ENCODE measurements at regions of chr2 and their contacts with region 1.

Region 1: DNA sequence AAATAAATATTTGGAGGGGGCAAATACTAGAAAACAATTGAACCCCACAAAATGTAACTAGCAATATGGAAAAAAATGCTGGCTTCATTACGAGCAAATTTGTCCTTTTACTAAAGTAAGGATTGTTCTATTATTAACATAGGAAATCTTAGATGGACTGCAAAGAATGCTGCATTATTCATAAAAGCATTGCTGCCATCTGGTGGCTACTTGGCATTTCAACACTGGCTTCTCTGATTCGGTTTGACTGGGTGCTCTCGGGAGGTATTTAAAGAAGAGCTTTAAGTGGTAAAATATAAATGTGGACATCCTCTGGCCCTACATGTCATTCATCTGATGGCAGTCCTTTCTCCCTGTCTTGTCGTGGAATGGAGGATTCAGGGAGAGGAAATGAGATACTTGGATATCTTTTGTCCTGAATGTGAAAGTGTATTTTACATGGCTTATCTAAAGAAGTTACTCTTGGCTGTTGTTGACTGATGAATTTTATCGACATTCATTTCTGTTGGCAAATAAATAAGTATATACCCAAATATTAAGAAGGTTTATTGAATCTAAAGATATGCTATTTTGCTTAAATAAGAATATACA is 130.2 kb downstream of the ARHGAP15 start:
- DNase-seq: peak; percentile 88
- ATAC-seq: peak; percentile 38
- H3K4me3 Mint-ChIP-seq: peak overlapping the region; percentile 72
- H3K27ac Mint-ChIP-seq: peak overlapping the region; percentile 98
- H3K4me1 Mint-ChIP-seq: peaks cover 71% of the 10 kb centered on the region
- H3K27me3 Mint-ChIP-seq: no peaks in the 10 kb centered on the region

Region 2: DNA sequence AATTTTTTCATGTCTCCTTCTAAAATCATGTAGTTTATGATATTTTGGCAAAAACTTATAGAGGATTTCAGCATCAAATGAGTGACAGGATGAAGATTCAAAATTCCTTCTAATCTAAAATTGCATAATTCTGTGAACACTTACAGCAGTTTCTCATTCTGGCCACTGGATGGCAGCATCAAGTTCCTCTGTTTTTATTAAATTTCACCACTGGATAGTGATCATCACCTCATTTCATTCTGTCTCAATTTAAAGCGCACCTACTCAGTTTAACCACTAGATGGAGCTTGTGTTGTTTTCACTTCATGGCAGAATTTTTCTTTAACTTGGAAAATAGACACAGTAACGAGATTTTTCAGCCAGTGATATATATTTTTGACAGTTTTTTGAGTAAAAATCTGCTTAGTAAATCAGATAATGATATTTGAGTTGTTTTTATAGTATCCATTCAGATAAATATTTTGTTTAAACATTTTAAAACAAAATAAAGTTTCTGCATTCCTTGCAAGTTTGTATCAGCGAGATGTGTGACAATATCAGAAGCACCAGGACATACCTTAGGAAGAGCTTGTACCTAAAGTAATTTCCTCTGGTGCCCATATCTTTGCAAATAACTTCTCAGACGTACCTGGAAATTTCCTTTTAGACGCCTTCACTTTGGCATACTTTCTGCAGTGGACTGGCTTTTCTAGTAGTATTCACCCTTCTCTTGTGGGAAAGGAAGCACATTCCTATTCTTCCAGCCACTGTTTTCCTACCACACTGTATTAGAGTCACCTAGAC is 225.0 kb before region 1 on chr2:
- CTCF ChIA-PET with region 1: interaction called, 20 read pairs
- DNase-seq: peak; percentile 70
- ATAC-seq: peak; percentile 89
- H3K4me3 Mint-ChIP-seq: no peak overlapping the region
- H3K27ac Mint-ChIP-seq: no peak overlapping the region
- H3K4me1 Mint-ChIP-seq: peaks cover 10% of the 10 kb centered on the region
- H3K27me3 Mint-ChIP-seq: peaks cover 2% of the 10 kb centered on the region

Region 3: GRCh38 chr2:143110758-143111428 is 148.6 kb before region 1 on chr2:
- CTCF ChIA-PET with region 1: interaction called, 64 read pairs
- DNase-seq: peak; percentile 78
- ATAC-seq: peak; percentile 90
- H3K4me3 Mint-ChIP-seq: peak overlapping the region; percentile 28
- H3K27ac Mint-ChIP-seq: peak overlapping the region; percentile 86
- H3K4me1 Mint-ChIP-seq: peaks cover 26% of the 10 kb centered on the region
- H3K27me3 Mint-ChIP-seq: no peaks in the 10 kb centered on the region

Region 4: DNA sequence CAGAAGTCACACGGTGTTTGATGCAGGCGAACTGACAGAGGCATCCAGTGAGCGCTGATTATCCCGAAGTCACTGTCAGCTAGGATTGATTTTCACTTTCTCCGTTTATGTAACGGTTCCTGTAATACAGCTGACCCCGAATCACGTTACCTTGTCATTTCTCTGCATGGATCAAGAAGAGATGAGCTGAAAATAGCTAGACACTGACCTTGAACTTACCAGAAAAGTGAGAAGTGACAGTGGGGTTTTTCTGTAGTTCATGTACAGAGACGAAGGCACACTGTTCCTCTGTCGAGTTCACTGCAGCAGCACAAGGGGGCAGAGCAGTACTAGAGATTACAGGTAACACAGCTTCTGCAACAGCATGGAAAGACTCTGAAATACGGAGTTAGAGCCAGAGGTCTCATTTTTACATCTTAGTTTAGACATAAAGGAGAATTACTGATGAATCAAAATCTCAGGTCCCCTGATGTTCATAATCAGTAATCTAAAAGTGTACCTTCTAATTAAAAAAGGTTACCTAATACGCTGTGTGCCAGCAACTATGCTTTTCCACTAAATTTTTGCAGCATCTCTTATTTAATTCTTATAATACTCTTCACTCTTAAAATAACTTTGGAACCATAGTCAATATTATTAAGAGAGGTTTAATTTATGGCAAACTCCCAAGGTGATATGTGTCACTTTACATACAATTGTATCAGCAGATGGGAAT is 97.2 kb before region 1 on chr2:
- CTCF ChIA-PET with region 1: interaction called, 15 read pairs
- DNase-seq: peak; percentile 58
- ATAC-seq: peak; percentile 90
- H3K4me3 Mint-ChIP-seq: no peak overlapping the region
- H3K27ac Mint-ChIP-seq: no peak overlapping the region
- H3K4me1 Mint-ChIP-seq: peaks cover 49% of the 10 kb centered on the region
- H3K27me3 Mint-ChIP-seq: no peaks in the 10 kb centered on the region

Region 5: GRCh38 chr2:143217512-143218115 is 41.8 kb before region 1 on chr2:
- CTCF ChIA-PET with region 1: interaction called, 17 read pairs
- DNase-seq: no peak
- ATAC-seq: no peak
- H3K4me3 Mint-ChIP-seq: no peak overlapping the region
- H3K27ac Mint-ChIP-seq: peak overlapping the region; percentile 45
- H3K4me1 Mint-ChIP-seq: peaks cover 18% of the 10 kb centered on the region
- H3K27me3 Mint-ChIP-seq: no peaks in the 10 kb centered on the region

Region 6: DNA sequence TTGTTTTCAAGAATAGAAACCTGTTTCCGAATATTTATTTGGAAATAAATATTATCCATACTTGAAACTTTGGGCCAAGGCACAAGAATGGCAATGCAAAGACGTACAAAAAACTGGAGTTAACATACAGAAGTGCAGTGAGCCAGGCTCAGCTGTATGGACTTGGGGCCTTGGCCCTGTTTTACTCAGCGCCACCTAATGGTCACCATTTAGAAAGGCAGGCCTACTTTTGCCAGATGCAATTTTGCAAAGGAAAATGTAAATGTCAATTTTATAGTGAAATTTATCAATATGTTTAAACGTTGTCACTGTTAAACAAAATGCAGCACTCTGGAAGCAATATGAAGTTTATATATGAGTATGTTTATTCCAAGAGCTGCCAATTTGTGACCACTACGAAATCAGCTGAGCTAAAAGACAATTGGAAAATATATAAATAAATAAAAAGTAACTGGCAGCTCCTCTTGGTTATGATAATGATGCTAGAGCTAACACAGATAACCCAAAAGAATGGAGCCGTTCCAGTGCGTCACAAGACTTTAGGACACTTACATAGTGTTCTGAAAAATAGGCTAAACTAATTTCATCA is 24.7 kb after region 1 on chr2:
- CTCF ChIA-PET with region 1: interaction called, 10 read pairs
- DNase-seq: peak; percentile 46
- ATAC-seq: peak; percentile 69
- H3K4me3 Mint-ChIP-seq: no peak overlapping the region
- H3K27ac Mint-ChIP-seq: peak overlapping the region; percentile 9
- H3K4me1 Mint-ChIP-seq: peaks cover 11% of the 10 kb centered on the region
- H3K27me3 Mint-ChIP-seq: no peaks in the 10 kb centered on the region